ENCODE measurements at regions of chr1 and their contacts with region 1.

Region 1: GRCh38 chr1:160726498-160727315 is 12.3 kb upstream of the SLAMF7 start:
- DNase-seq: peak; percentile 71 to 84 (median 83)
- H3K4me3 ChIP-seq: peak overlapping the region in 2 of 3 experiments; percentile 0 to 60
- H3K4me3 Mint-ChIP-seq: no peak overlapping the region
- H3K27ac ChIP-seq: peak overlapping the region in 1 of 2 donors; percentile 65
- H3K27ac Mint-ChIP-seq: no peak overlapping the region
- H3K4me1 ChIP-seq: peaks cover 44 to 53% of the 10 kb centered on the region in 2 donors
- H3K4me1 Mint-ChIP-seq: peaks cover 24% of the 10 kb centered on the region
- H3K27me3 ChIP-seq: no peaks in the 10 kb centered on the region
- H3K27me3 Mint-ChIP-seq: no peaks in the 10 kb centered on the region
- CTCF ChIP-seq: peak; percentile 97

Region 2: GRCh38 chr1:160768295-160768657 is 41.6 kb after region 1 on chr1:
- intact Hi-C with region 1: loop called (anchors 1 to 5 kb)
- DNase-seq: peak; percentile 76 to 84 (median 79)
- H3K4me3 ChIP-seq: peak overlapping the region in 1 of 3 experiments; percentile 48
- H3K4me3 Mint-ChIP-seq: peak overlapping the region; percentile 28 to 69
- H3K27ac ChIP-seq: peak overlapping the region; percentile 7 to 75
- H3K27ac Mint-ChIP-seq: peak overlapping the region; percentile 62 to 84 (median 79)
- H3K4me1 ChIP-seq: peaks cover 18 to 24% of the 10 kb centered on the region in 2 donors
- H3K4me1 Mint-ChIP-seq: peaks cover 19% of the 10 kb centered on the region
- H3K27me3 ChIP-seq: no peaks in the 10 kb centered on the region
- H3K27me3 Mint-ChIP-seq: no peaks in the 10 kb centered on the region
- CTCF ChIP-seq: peak; percentile 83

Region 3: GRCh38 chr1:160830321-160831153 is 103.8 kb after region 1 on chr1:
- intact Hi-C with region 1: loop called in 1 of 2 experiments (anchors 10 kb)
- DNase-seq: peak in 2 of 3 donors; percentile 27 to 46
- H3K4me3 ChIP-seq: no peak overlapping the region
- H3K4me3 Mint-ChIP-seq: no peak overlapping the region
- H3K27ac ChIP-seq: no peak overlapping the region
- H3K27ac Mint-ChIP-seq: peak overlapping the region in 3 of 7 donors; percentile 23 to 35 (median 26)
- H3K4me1 ChIP-seq: peaks cover 0 to 5% of the 10 kb centered on the region in 2 donors
- H3K4me1 Mint-ChIP-seq: peaks cover 11% of the 10 kb centered on the region
- H3K27me3 ChIP-seq: no peaks in the 10 kb centered on the region
- H3K27me3 Mint-ChIP-seq: peaks cover 0 to 2% (median 0%) of the 10 kb centered on the region in 3 donors
- CTCF ChIP-seq: peak; percentile 56